PC-3 (cell line): ENCODE measurements at regions of chr2 and their contacts with region 1.

Region 1: DNA sequence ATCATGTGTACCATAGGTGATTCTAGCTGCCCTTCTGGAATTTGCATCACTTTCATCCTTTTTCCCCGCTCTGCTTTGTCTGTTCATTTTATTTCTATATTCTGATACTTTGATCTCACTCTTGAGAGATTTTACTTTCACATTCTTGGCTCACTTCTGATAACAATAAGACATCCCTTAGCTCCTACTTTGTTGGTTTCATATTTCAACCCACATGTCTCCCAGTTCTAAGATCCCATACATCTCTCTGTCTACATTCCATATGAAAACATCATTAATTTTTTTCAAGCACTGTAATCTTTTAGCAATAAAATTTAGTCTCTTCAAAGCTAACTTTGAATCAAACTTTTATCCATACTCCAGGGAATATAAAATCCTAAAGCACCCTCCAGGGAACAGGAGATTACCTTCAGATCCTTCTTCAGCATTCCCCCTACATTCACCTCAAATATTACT is 75.6 kb downstream of the COL3A1 start:
- DNase-seq: no peak
- ATAC-seq: no peak
- H3K4me3 ChIP-seq: no peak overlapping the region
- H3K27ac ChIP-seq: no peak overlapping the region
- H3K4me1 ChIP-seq: no peaks in the 10 kb centered on the region
- H3K27me3 ChIP-seq: no peaks in the 10 kb centered on the region
- CTCF ChIP-seq: no peak

Region 2: DNA sequence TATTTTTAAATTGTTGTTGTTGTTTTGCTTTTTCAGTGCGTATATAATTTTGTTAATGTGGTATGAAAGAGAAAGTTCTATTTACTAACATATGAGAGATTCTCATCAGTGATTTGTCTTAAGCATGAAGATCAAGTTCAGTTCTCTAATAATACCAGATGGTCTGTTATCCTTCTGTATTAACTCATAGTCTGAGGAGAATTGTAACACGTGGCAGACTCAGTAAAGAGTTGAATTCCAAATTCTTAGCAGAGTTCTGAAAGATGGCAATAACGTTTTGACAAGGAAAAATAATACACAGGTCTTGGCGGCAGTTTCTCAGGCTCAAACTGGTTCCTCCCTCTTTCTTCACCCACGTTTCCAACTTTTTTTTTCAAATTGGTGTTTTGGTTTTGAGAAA is 92.8 kb before region 1 on chr2:
- CTCF ChIA-PET with region 1: no interaction called
- POLR2A ChIA-PET with region 1: no interaction called
- intact Hi-C with region 1: no loop called
- DNase-seq: no peak
- ATAC-seq: no peak
- H3K4me3 ChIP-seq: no peak overlapping the region
- H3K27ac ChIP-seq: no peak overlapping the region
- H3K4me1 ChIP-seq: no peaks in the 10 kb centered on the region
- H3K27me3 ChIP-seq: no peaks in the 10 kb centered on the region
- CTCF ChIP-seq: no peak

Region 3: DNA sequence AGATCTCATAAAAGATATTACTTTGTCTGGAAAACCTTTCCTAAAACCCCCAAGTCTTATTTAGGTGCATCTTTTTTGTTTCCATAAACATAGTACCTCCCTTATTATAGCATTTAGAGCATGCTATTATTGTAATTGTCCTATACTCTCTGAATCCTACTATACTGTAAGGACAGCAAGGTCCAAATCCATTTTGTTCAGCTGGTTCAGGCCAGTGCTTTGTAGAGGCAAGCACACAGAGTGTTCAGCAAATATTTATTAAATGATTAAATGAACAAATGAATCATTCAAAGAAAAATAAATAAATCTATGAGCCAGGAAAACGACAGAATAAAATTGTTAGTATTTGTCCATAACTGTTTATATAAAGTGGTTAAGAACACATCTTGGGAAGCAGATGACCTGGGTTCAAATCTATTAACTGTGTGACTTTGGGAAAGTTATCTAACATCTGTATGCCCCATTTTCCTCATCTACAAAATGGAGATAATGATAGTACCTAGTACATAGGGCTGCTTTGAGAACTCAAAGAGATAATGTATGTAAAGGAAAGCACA is 10.4 kb after region 1 on chr2:
- CTCF ChIA-PET with region 1: no interaction called
- POLR2A ChIA-PET with region 1: no interaction called
- intact Hi-C with region 1: loop called (anchors 1 kb)
- DNase-seq: peak; percentile 25
- ATAC-seq: peak; percentile 82
- H3K4me3 ChIP-seq: no peak overlapping the region
- H3K27ac ChIP-seq: peak overlapping the region; percentile 30; the same call in 1 of the 2 replicates
- H3K4me1 ChIP-seq: peaks cover 11% of the 10 kb centered on the region
- H3K27me3 ChIP-seq: no peaks in the 10 kb centered on the region
- CTCF ChIP-seq: no peak